ENCODE measurements at regions of chr12 and their contacts with region 1.

Region 1: GRCh38 chr12:107159384-107159900 is 66.1 kb upstream of the CRY1 start:
- DNase-seq: no peak
- H3K4me3 ChIP-seq: no peak overlapping the region
- H3K27ac ChIP-seq: no peak overlapping the region
- H3K4me1 ChIP-seq: no peaks in the 10 kb centered on the region
- H3K27me3 ChIP-seq: no peaks in the 10 kb centered on the region
- CTCF ChIP-seq: no peak

Region 2: DNA sequence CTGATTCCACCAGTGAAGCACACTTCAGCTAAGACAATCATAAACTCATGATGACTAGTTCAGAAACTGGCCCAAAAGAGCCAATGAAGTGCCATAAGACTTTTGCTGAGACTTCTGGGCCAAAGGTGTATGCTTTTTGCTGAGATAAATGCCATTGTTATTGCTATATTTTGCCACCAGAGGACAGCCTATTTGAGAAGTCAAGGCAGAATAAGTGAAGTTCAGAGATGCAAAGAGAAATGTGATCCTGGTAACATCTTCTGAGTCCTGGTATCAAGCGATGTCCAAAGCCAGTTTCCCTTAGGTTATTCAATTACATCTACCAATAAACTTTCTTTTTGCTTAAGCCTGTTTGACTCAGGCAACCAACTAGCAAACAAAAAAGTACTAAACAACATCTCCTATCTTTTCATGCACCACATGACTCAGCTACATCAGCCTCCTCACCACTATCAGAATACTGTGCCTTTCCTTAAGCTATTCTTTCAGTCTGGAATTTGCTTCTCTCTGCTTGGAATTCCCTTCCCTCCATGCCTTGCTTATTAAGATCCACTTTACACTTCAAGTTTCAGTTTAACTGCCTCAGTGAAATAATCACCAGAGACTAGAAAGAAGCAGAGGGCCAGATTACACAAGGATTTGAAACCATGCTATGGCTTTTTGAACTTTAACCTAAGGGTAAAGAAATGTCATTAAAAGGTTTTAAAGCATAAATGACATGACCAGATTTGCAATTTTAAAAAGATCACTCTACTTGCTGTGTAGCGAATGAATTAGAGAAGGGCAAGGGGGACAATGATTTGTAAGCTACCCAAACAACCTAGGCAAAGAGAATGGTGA is 80.0 kb before region 1 on chr12:
- CTCF ChIA-PET with region 1: no interaction called
- dilution Hi-C with region 1: no loop called
- in situ Hi-C with region 1: no loop called
- intact Hi-C with region 1: no loop called
- DNase-seq: peak; percentile 44
- H3K4me3 ChIP-seq: no peak overlapping the region
- H3K27ac ChIP-seq: no peak overlapping the region
- H3K4me1 ChIP-seq: no peaks in the 10 kb centered on the region
- H3K27me3 ChIP-seq: no peaks in the 10 kb centered on the region
- CTCF ChIP-seq: peak; percentile 69 to 74

Region 3: DNA sequence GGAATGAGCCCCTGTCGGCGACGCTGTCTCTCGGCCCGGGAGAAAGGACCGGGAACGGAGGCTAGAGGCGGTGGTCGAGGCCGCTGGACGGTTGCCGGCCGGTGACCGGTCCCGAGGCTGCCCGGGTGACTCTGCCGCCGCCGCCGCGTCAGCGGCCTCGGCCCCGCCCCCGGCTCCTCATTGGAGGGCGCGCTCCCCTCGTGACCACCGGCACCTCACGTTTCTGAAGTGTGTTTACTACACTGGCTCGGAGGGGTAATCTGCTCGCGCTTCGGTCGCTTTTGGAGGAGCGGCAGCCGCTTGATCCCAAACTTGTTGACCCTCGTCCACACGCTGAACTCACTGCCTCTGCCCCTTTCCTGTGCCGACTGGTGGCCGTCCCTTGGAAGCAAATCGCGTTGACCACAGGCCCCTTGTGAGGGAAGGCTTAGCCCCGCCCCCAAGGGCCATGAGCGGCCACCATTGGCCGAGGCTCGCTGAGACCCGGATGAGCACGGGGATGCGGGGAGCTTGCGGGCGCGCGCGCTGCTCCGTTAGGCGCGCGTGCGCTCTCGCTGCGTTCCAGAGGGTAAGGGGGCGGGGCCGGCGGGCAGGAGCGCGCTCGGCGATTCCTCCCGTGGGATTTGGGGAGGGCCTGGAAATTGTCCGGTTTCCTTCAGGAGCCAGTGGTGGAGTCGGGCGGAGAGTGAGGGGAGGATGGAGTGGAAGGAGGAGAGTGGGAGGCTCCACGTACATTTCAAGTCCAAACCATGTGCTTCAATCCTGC is 65.8 kb before region 1 on chr12 and contains the start of gene CRY1:
- CTCF ChIA-PET with region 1: no interaction called
- dilution Hi-C with region 1: no loop called
- in situ Hi-C with region 1: no loop called
- intact Hi-C with region 1: no loop called
- DNase-seq: peak; percentile 94
- H3K4me3 ChIP-seq: peak within 1 kb of the TSS; percentile 59 to 75 (median 65)
- H3K27ac ChIP-seq: peak within 1 kb of the TSS; percentile 94
- H3K4me1 ChIP-seq: peaks cover 24% of the 10 kb centered on the region
- H3K27me3 ChIP-seq: no peaks in the 10 kb centered on the region
- CTCF ChIP-seq: no peak
- total RNA-seq, gene CRY1: 10.0 to 12.3 TPM

Region 4: DNA sequence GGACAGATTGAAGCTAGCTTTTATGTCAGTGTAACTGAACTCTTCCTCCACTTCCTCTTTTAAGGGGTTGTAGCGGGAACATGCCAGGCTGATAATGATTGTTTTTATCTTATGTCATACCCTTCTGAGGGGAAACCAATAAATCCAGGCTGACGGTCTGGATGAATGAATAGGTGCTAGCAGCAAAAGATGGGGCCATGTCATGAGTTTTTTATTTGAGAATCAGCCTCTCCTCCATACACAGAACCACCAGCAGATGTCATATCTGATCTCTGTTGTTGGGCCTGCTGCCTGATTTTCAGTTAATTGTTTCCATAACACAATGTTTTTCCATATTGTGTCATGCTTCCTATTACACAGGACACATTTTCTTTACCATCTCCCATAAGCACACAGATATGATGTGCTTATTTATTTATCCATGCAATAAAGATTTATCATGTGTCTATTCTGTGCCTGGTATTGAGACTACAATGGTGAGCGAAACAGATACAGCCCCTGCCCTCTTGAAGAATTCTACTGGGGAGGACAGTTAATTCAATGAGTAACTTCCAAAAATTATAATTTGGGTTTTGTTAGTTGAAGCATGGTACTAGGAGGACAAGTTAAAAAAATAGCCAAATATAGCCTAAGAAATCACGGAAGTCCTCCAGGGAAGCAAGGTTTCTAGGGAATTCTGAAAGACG is 32.5 kb before region 1 on chr12:
- CTCF ChIA-PET with region 1: no interaction called
- dilution Hi-C with region 1: loop called (anchors 5 kb)
- in situ Hi-C with region 1: no loop called
- intact Hi-C with region 1: no loop called
- DNase-seq: peak; percentile 7
- H3K4me3 ChIP-seq: no peak overlapping the region
- H3K27ac ChIP-seq: no peak overlapping the region
- H3K4me1 ChIP-seq: no peaks in the 10 kb centered on the region
- H3K27me3 ChIP-seq: no peaks in the 10 kb centered on the region
- CTCF ChIP-seq: peak; percentile 35 to 60

Measured in mammary epithelial cell (primary cell).